ENCODE measurements at regions of chr9 and their contacts with region 1.

Region 1: GRCh38 chr9:123349691-123350480 is 6.1 kb upstream of the CRB2 start:
- DNase-seq: peak; percentile 54 to 72 (median 61)
- H3K4me3 ChIP-seq: no peak overlapping the region
- H3K4me3 Mint-ChIP-seq: no peak overlapping the region
- H3K27ac ChIP-seq: no peak overlapping the region
- H3K27ac Mint-ChIP-seq: no peak overlapping the region
- H3K4me1 ChIP-seq: no peaks in the 10 kb centered on the region
- H3K4me1 Mint-ChIP-seq: peaks cover 0 to 4% (median 2%) of the 10 kb centered on the region in 4 donors
- H3K27me3 ChIP-seq: no peaks in the 10 kb centered on the region
- H3K27me3 Mint-ChIP-seq: peaks cover 6 to 11% of the 10 kb centered on the region in 2 donors

Region 2: GRCh38 chr9:122464633-122465567 is 885.0 kb before region 1 on chr9:
- CTCF ChIA-PET with region 1: interaction called, 5 read pairs
- POLR2A ChIA-PET with region 1: no interaction called
- intact Hi-C with region 1: loop called (anchors 1 kb)
- DNase-seq: peak; percentile 66 to 70 (median 68)
- H3K4me3 ChIP-seq: peak overlapping the region; percentile 37 to 40
- H3K4me3 Mint-ChIP-seq: peak overlapping the region; percentile 84 to 96 (median 91)
- H3K27ac ChIP-seq: peak overlapping the region; percentile 18
- H3K27ac Mint-ChIP-seq: peak overlapping the region; percentile 66 to 94 (median 92)
- H3K4me1 ChIP-seq: peaks cover 9% of the 10 kb centered on the region
- H3K4me1 Mint-ChIP-seq: peaks cover 7 to 11% (median 9%) of the 10 kb centered on the region in 4 donors
- H3K27me3 ChIP-seq: no peaks in the 10 kb centered on the region
- H3K27me3 Mint-ChIP-seq: peaks cover 30 to 47% of the 10 kb centered on the region in 2 donors

Region 3: GRCh38 chr9:122642226-122642625 is 707.7 kb before region 1 on chr9:
- CTCF ChIA-PET with region 1: no interaction called
- POLR2A ChIA-PET with region 1: no interaction called
- intact Hi-C with region 1: no loop called
- DNase-seq: no peak
- H3K4me3 ChIP-seq: no peak overlapping the region
- H3K4me3 Mint-ChIP-seq: no peak overlapping the region
- H3K27ac ChIP-seq: no peak overlapping the region
- H3K27ac Mint-ChIP-seq: no peak overlapping the region
- H3K4me1 ChIP-seq: no peaks in the 10 kb centered on the region
- H3K4me1 Mint-ChIP-seq: no peaks in the 10 kb centered on the region
- H3K27me3 ChIP-seq: no peaks in the 10 kb centered on the region
- H3K27me3 Mint-ChIP-seq: peaks cover 7 to 8% of the 10 kb centered on the region in 2 donors

Region 4: DNA sequence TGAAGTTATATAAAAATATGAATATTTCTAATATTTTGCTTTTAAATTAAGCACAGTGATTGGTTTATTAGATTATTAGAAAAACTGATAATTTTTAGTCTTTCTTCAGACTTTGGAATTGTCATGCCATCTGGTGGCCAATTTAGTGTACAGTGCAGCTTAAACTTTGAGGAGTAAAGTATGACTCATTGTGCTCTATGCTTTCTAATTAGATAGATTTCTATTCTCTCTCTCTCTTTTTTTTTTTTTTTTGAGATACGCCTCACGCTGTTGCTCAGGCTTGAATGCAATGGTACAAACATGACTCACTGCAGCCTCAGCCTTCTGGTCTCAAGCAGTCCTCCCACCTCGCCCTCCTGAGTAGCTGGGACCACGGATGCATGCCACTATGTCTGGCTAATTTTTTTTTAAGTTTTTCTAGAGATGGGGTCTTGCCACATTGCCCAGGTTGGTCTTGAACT is 358.5 kb before region 1 on chr9:
- CTCF ChIA-PET with region 1: interaction called, 10 read pairs
- POLR2A ChIA-PET with region 1: no interaction called
- intact Hi-C with region 1: no loop called
- DNase-seq: peak; percentile 25 to 61 (median 32)
- H3K4me3 ChIP-seq: no peak overlapping the region
- H3K4me3 Mint-ChIP-seq: no peak overlapping the region
- H3K27ac ChIP-seq: no peak overlapping the region
- H3K27ac Mint-ChIP-seq: peak overlapping the region in 3 of 7 donors; percentile 29 to 88 (median 29)
- H3K4me1 ChIP-seq: no peaks in the 10 kb centered on the region
- H3K4me1 Mint-ChIP-seq: peaks cover 0 to 3% (median under 1%) of the 10 kb centered on the region in 4 donors
- H3K27me3 ChIP-seq: no peaks in the 10 kb centered on the region
- H3K27me3 Mint-ChIP-seq: no peaks in the 10 kb centered on the region

Region 5: GRCh38 chr9:123081824-123082223 is 268.1 kb before region 1 on chr9:
- CTCF ChIA-PET with region 1: interaction called, 35 read pairs
- POLR2A ChIA-PET with region 1: no interaction called
- intact Hi-C with region 1: loop called (anchors 1 kb)
- DNase-seq: peak in 4 of 5 donors; percentile 8 to 24 (median 20)
- H3K4me3 ChIP-seq: no peak overlapping the region
- H3K4me3 Mint-ChIP-seq: no peak overlapping the region
- H3K27ac ChIP-seq: no peak overlapping the region
- H3K27ac Mint-ChIP-seq: peak overlapping the region in 2 of 7 donors; percentile 16 to 62
- H3K4me1 ChIP-seq: no peaks in the 10 kb centered on the region
- H3K4me1 Mint-ChIP-seq: no peaks in the 10 kb centered on the region
- H3K27me3 ChIP-seq: no peaks in the 10 kb centered on the region
- H3K27me3 Mint-ChIP-seq: no peaks in the 10 kb centered on the region

Region 6: DNA sequence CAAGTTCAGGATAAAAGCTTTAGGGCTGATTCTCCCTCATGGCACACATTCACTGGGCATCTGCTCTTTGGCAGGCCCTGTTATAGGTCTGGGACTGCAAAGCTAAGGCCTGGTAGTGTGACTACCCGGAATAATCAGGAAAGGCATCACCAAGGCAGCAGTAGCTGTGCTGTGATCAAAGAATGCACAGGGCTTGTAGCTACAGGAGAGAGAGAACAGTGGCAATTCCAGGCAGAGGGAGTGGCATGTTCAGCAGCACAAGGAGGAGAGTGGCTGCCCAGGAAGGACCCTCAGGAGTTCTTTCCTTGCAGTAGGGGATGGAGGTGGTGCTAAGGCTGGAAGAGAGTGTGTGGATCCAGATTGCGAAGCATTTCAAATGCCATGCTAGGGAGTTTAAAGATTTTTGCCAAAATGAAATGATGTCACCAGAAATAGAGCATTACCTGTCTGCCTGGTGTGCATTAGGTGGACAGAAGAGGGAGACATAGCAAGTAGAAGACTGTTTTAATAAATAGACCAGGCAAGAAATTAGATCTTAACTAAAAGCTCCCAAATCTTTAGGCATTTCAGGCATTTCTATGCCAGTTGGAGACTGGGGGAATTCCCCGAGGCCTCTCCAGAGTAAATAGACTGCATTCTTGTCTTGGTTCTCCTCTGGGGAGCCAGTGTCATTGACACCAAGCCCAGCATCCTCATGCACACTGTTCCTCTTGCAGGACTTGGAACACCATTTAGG is 247.3 kb before region 1 on chr9:
- CTCF ChIA-PET with region 1: interaction called, 41 read pairs
- POLR2A ChIA-PET with region 1: no interaction called
- intact Hi-C with region 1: loop called (anchors 2 kb)
- DNase-seq: no peak
- H3K4me3 ChIP-seq: no peak overlapping the region
- H3K4me3 Mint-ChIP-seq: peak overlapping the region in 1 of 8 donors; percentile 44
- H3K27ac ChIP-seq: no peak overlapping the region
- H3K27ac Mint-ChIP-seq: peak overlapping the region in 4 of 7 donors; percentile 3 to 92 (median 48)
- H3K4me1 ChIP-seq: no peaks in the 10 kb centered on the region
- H3K4me1 Mint-ChIP-seq: peaks cover 0 to 2% (median 0%) of the 10 kb centered on the region in 4 donors
- H3K27me3 ChIP-seq: no peaks in the 10 kb centered on the region
- H3K27me3 Mint-ChIP-seq: no peaks in the 10 kb centered on the region

Region 7: GRCh38 chr9:123196124-123196523 is 153.8 kb before region 1 on chr9:
- CTCF ChIA-PET with region 1: no interaction called
- POLR2A ChIA-PET with region 1: no interaction called
- intact Hi-C with region 1: no loop called
- DNase-seq: no peak
- H3K4me3 ChIP-seq: no peak overlapping the region
- H3K4me3 Mint-ChIP-seq: no peak overlapping the region
- H3K27ac ChIP-seq: no peak overlapping the region
- H3K27ac Mint-ChIP-seq: no peak overlapping the region
- H3K4me1 ChIP-seq: no peaks in the 10 kb centered on the region
- H3K4me1 Mint-ChIP-seq: peaks cover 0 to 1% (median 0%) of the 10 kb centered on the region in 4 donors
- H3K27me3 ChIP-seq: no peaks in the 10 kb centered on the region
- H3K27me3 Mint-ChIP-seq: no peaks in the 10 kb centered on the region

Region 8: GRCh38 chr9:123338710-123339665 is 10.9 kb before region 1 on chr9:
- CTCF ChIA-PET with region 1: interaction called, 42 read pairs
- POLR2A ChIA-PET with region 1: interaction called, 4 read pairs
- intact Hi-C with region 1: no loop called
- DNase-seq: peak; percentile 20 to 64 (median 30)
- H3K4me3 ChIP-seq: peak overlapping the region; percentile 20 to 61
- H3K4me3 Mint-ChIP-seq: peak overlapping the region; percentile 87 to 95 (median 90)
- H3K27ac ChIP-seq: peak overlapping the region; percentile 34
- H3K27ac Mint-ChIP-seq: peak overlapping the region; percentile 75 to 93 (median 89)
- H3K4me1 ChIP-seq: peaks cover 29% of the 10 kb centered on the region
- H3K4me1 Mint-ChIP-seq: peaks cover 20 to 36% (median 28%) of the 10 kb centered on the region in 4 donors
- H3K27me3 ChIP-seq: no peaks in the 10 kb centered on the region
- H3K27me3 Mint-ChIP-seq: no peaks in the 10 kb centered on the region

Measured in CD4-positive, alpha-beta memory T cell (primary cell).